ENCODE measurements at regions of chr1 and their contacts with region 1.

Region 1: GRCh38 chr1:9629445-9630201 is 21.9 kb upstream of the PIK3CD start:
- DNase-seq: peak; percentile 59 to 89 (median 75)
- H3K4me3 ChIP-seq: peak overlapping the region; percentile 94
- H3K4me3 Mint-ChIP-seq: peak overlapping the region; percentile 89 to 98 (median 97)
- H3K27ac ChIP-seq: peak overlapping the region; percentile 76
- H3K27ac Mint-ChIP-seq: peak overlapping the region; percentile 87 to 98 (median 93)
- H3K4me1 ChIP-seq: peaks cover 59% of the 10 kb centered on the region
- H3K4me1 Mint-ChIP-seq: peaks cover 46 to 81% (median 71%) of the 10 kb centered on the region in 3 donors
- H3K27me3 ChIP-seq: no peaks in the 10 kb centered on the region
- H3K27me3 Mint-ChIP-seq: no peaks in the 10 kb centered on the region

Region 2: DNA sequence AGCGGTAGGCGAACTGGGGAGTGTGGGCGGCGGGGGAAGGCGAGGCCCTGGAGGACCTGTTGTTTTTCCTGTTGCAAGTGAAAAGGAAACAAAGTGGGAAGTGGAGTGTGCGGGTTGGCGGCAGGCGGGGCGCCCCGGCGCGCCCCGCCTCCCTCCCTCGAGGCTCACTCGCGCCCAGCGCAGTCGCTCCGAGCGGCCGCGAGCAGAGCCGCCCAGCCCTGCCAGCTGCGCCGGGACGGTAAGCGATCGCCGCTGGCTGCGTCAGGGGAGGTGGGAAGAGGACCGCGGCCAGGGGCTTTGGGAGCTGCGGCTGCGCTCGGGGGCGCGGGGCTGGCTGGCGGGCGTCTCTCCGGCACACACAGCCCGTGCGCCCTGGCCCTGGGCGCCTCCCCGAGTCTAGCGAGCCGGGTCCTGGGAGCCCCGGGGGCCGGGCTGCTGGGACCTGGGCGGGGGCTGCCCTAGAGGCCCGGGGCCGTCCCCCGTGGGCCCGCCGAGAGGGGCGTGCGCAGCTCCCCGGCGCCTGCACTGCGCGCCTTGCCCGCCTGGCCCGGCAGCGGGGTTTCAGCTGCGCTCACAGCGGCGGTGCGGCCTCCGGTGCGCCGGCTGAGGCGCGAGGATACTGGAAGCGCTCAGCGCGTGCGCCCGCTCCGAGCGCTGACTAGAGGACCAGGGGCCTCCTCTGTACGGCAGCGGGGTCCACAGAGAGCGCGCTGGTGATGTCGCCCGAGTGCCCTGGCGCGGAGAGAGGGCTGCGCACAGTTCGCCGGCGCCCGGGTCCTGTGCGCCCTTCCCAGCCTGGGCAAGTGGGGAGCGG is 22.1 kb after region 1 on chr1 and contains the start of gene PIK3CD:
- CTCF ChIA-PET with region 1: interaction called, 136 read pairs
- POLR2A ChIA-PET with region 1: interaction called, 161 read pairs
- DNase-seq: peak in 4 of 5 donors; percentile 23 to 52 (median 38)
- H3K4me3 ChIP-seq: peak within 1 kb of the TSS; percentile 91
- H3K4me3 Mint-ChIP-seq: peak within 1 kb of the TSS; percentile 97 to 100 (median 100)
- H3K27ac ChIP-seq: peak within 1 kb of the TSS; percentile 69
- H3K27ac Mint-ChIP-seq: peak within 1 kb of the TSS; percentile 85 to 100 (median 98)
- H3K4me1 ChIP-seq: peaks cover 65% of the 10 kb centered on the region
- H3K4me1 Mint-ChIP-seq: peaks cover 50 to 66% (median 54%) of the 10 kb centered on the region in 3 donors
- H3K27me3 ChIP-seq: no peaks in the 10 kb centered on the region
- H3K27me3 Mint-ChIP-seq: peaks cover 0 to 3% of the 10 kb centered on the region in 2 donors
- total RNA-seq, gene PIK3CD: 157 to 165 TPM

Region 3: GRCh38 chr1:9680828-9681227 is 51.2 kb after region 1 on chr1:
- CTCF ChIA-PET with region 1: interaction called, 86 read pairs
- POLR2A ChIA-PET with region 1: interaction called, 12 read pairs
- DNase-seq: no peak
- H3K4me3 ChIP-seq: no peak overlapping the region
- H3K4me3 Mint-ChIP-seq: peak overlapping the region in 1 of 7 donors; percentile 44
- H3K27ac ChIP-seq: no peak overlapping the region
- H3K27ac Mint-ChIP-seq: peak overlapping the region in 7 of 8 donors; percentile 37 to 78 (median 68)
- H3K4me1 ChIP-seq: peaks cover 62% of the 10 kb centered on the region
- H3K4me1 Mint-ChIP-seq: peaks cover 50 to 76% (median 73%) of the 10 kb centered on the region in 3 donors
- H3K27me3 ChIP-seq: no peaks in the 10 kb centered on the region
- H3K27me3 Mint-ChIP-seq: no peaks in the 10 kb centered on the region

Region 4: GRCh38 chr1:9711466-9712020 is 81.9 kb after region 1 on chr1:
- CTCF ChIA-PET with region 1: interaction called, 280 read pairs
- POLR2A ChIA-PET with region 1: interaction called, 18 read pairs
- DNase-seq: peak in 1 of 5 donors; percentile 50
- H3K4me3 ChIP-seq: no peak overlapping the region
- H3K4me3 Mint-ChIP-seq: peak overlapping the region in 2 of 7 donors; percentile 23 to 60
- H3K27ac ChIP-seq: no peak overlapping the region
- H3K27ac Mint-ChIP-seq: peak overlapping the region; percentile 26 to 93 (median 76)
- H3K4me1 ChIP-seq: peaks cover 51% of the 10 kb centered on the region
- H3K4me1 Mint-ChIP-seq: peaks cover 37 to 71% (median 41%) of the 10 kb centered on the region in 3 donors
- H3K27me3 ChIP-seq: no peaks in the 10 kb centered on the region
- H3K27me3 Mint-ChIP-seq: no peaks in the 10 kb centered on the region

Region 5: DNA sequence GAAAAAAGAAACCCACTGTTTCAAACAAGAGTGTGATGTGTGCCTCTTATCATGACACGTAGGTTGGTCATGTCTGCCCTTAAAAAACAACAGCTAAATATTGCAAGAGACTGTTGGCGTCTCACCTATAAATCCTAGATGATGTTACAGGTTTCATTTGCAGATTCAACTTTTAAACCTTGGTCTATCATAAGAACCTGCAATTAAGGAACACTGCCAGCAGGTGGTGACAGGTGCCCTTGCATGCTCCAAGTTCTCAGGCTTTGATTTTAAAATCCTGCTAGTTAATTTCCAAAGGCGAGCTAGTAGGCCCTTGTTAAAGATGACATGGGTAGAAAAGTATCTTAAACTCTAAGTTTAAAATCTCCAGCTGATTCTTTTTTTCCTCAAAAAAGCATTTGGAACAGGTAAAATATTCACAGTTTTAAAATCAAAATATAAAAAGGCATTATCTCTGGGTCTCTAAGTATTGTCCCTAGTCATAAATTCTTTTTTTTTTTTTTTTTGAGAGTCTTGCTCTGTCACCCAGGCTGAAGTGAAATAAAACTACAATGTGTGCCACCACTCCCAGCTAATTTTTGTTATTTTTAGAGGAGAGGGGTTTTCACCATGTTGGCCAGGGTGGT is 155.0 kb after region 1 on chr1:
- CTCF ChIA-PET with region 1: interaction called, 23 read pairs
- POLR2A ChIA-PET with region 1: no interaction called
- DNase-seq: peak; percentile 40 to 74 (median 63)
- H3K4me3 ChIP-seq: no peak overlapping the region
- H3K4me3 Mint-ChIP-seq: peak overlapping the region in 1 of 7 donors; percentile 49
- H3K27ac ChIP-seq: no peak overlapping the region
- H3K27ac Mint-ChIP-seq: peak overlapping the region in 3 of 8 donors; percentile 40 to 66 (median 63)
- H3K4me1 ChIP-seq: peaks cover 22% of the 10 kb centered on the region
- H3K4me1 Mint-ChIP-seq: peaks cover 21 to 54% (median 34%) of the 10 kb centered on the region in 3 donors
- H3K27me3 ChIP-seq: no peaks in the 10 kb centered on the region
- H3K27me3 Mint-ChIP-seq: no peaks in the 10 kb centered on the region

Measured in CD8-positive, alpha-beta memory T cell (primary cell).